A549 (cell line): ENCODE measurements at regions of chr11 and their contacts with region 1.

Region 1: GRCh38 chr11:119624102-119624615 is 104.8 kb downstream of the NECTIN1 start:
- DNase-seq: peak in 1 of 2 experiments; percentile 36
- ATAC-seq: peak; percentile 48 to 65; a peak in 5 of 6 replicates
- H3K4me3 ChIP-seq: no peak overlapping the region
- H3K27ac ChIP-seq: no peak overlapping the region
- H3K4me1 ChIP-seq: no peaks in the 10 kb centered on the region
- CTCF ChIP-seq: peak; percentile 41; the same call in 2 of the 3 replicates
- EP300 ChIP-seq: no peak
- POLR2A ChIP-seq: no peak
- RAD21 ChIP-seq: peak; percentile 6 to 10; a peak in 1 of 5 replicates

Region 2: DNA sequence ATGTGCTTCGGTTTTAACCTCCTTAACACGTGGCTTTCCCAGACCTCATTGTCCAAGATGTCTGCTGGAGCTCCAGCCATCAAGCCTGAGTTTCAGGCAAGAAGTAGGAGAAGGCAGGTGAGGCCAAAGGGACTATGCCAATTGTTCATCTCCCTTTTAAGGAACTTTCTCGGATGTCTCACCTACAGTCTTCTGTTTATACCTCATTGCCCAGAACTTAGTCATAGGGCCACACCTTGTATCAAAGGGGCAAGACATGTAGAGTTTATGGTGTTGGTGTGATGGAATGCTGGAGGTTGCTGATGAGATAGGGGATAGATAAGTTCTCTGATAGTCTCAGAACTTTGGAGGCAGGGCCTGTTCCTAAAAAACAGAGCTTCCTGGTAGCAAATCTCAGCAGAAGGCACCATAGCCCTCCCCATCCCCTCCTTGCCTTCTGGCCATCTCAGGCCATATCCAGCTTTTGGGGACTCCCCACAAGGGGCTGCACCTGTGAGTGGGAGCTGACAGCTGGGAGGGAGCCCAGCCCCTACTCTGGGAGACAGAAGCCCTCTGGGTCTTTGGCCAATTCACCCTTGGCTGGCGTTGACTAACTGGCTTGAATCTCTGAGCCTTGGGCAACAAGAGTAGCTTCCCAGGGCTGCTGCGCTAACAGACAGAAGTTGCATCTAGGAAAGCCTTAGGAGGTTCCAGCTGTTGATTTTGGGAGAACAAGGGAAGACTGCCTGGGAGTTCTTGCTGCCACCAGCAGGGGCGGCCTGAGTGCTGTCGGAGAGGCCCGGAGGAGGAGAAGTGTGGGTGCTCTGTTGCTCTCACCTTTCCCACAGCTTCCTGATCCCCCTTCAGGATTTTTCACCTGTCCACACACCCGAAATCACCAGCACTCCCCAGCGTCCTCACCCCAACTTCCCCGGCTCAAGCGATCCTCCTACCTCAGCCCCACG is 51.4 kb before region 1 on chr11:
- CTCF ChIA-PET with region 1: no interaction called
- POLR2A ChIA-PET with region 1: no interaction called
- DNase-seq: no peak
- ATAC-seq: peak in 1 of 2 experiments; percentile 29; a peak in 1 of 6 replicates
- H3K4me3 ChIP-seq: no peak overlapping the region
- H3K27ac ChIP-seq: no peak overlapping the region
- H3K4me1 ChIP-seq: peaks cover 11% of the 10 kb centered on the region
- CTCF ChIP-seq: no peak
- EP300 ChIP-seq: no peak
- POLR2A ChIP-seq: no peak
- RAD21 ChIP-seq: no peak

Region 3: GRCh38 chr11:119641983-119642745 is 18.0 kb after region 1 on chr11:
- CTCF ChIA-PET with region 1: interaction called, 10 read pairs
- POLR2A ChIA-PET with region 1: no interaction called
- DNase-seq: peak; percentile 30 to 38
- ATAC-seq: peak; percentile 57 to 85; a peak in 4 of 6 replicates
- H3K4me3 ChIP-seq: no peak overlapping the region
- H3K27ac ChIP-seq: no peak overlapping the region
- H3K4me1 ChIP-seq: no peaks in the 10 kb centered on the region
- CTCF ChIP-seq: peak; percentile 47
- EP300 ChIP-seq: no peak
- POLR2A ChIP-seq: no peak
- RAD21 ChIP-seq: peak; percentile 35 to 36; a peak in 3 of 5 replicates